Ovary (tissue), 10 donors: ENCODE measurements at regions of chr17 and their contacts with region 1.

Region 1: GRCh38 chr17:77155125-77155524 is 14.4 kb downstream of the SEC14L1 start:
- DNase-seq: no peak
- H3K4me3 ChIP-seq: no peak overlapping the region
- H3K27ac ChIP-seq: no peak overlapping the region
- H3K4me1 ChIP-seq: peaks cover 7% of the 10 kb centered on the region
- H3K27me3 ChIP-seq: no peaks in the 10 kb centered on the region
- CTCF ChIP-seq: no peak
- EP300 ChIP-seq: no peak
- POLR2A ChIP-seq: no peak

Region 2: DNA sequence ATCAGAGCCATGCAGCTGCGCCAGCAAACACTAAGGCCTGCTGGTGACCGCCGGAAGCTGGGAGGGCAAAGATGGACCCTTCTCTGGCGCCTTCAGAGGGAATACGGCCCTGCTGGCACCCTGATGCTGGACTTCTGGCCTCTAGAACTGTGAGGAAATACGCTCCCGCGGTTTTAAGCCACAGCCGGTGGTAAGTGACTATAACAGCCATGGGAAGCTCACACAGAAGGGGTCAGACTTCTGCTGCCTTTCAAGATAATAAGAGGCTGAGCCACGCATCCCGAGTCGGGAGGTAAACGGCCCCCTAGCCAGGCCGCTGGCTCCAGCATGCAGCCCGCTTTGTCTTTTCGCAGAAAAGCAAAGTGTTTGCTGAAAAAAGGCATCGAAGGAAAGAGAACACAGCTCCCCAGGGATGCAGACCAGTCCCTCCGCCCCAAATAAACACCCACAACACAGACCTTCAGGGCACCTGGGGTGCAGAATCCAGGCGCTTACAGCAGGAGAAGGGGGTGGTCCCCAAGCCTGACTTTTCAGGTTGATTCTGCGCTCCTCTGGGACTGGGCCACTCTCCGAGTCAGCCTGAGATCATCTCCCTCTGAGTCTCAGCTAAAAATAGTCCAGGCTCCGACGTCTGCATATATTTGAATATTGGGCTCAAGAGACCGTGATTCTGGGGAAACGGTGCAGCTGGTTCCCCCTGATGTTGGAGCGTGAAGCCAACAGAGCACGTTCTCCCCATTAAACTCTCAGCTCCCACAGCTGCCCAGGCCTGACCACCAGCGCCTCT is 197.3 kb before region 1 on chr17:
- intact Hi-C with region 1: no loop called
- DNase-seq: no peak
- H3K4me3 ChIP-seq: no peak overlapping the region
- H3K27ac ChIP-seq: no peak overlapping the region
- H3K4me1 ChIP-seq: no peaks in the 10 kb centered on the region
- H3K27me3 ChIP-seq: no peaks in the 10 kb centered on the region
- CTCF ChIP-seq: no peak
- EP300 ChIP-seq: no peak
- POLR2A ChIP-seq: no peak

Region 3: GRCh38 chr17:77109764-77110359 is 45.3 kb before region 1 on chr17:
- intact Hi-C with region 1: loop called in 1 of 4 experiments (anchors 5 kb)
- DNase-seq: no peak
- H3K4me3 ChIP-seq: no peak overlapping the region
- H3K27ac ChIP-seq: peak overlapping the region in 1 of 2 donors; percentile 43
- H3K4me1 ChIP-seq: peaks cover 9% of the 10 kb centered on the region
- H3K27me3 ChIP-seq: no peaks in the 10 kb centered on the region
- CTCF ChIP-seq: peak in 2 of 3 donors; percentile 22 to 35
- EP300 ChIP-seq: peak; percentile 34
- POLR2A ChIP-seq: no peak